ENCODE measurements at regions of chr17 and their contacts with region 1.

Region 1: GRCh38 chr17:20278805-20279204 is 188.5 kb downstream of the LGALS9B start:
- DNase-seq: no peak
- H3K4me3 ChIP-seq: no peak overlapping the region
- H3K27ac ChIP-seq: no peak overlapping the region
- H3K4me1 ChIP-seq: no peaks in the 10 kb centered on the region
- H3K27me3 ChIP-seq: no peaks in the 10 kb centered on the region
- CTCF ChIP-seq: no peak

Region 2: GRCh38 chr17:20235747-20236146 is 43.1 kb before region 1 on chr17:
- CTCF ChIA-PET with region 1: no interaction called
- dilution Hi-C with region 1: loop called (anchors 5 kb)
- in situ Hi-C with region 1: no loop called
- intact Hi-C with region 1: no loop called
- DNase-seq: no peak
- H3K4me3 ChIP-seq: no peak overlapping the region
- H3K27ac ChIP-seq: no peak overlapping the region
- H3K4me1 ChIP-seq: no peaks in the 10 kb centered on the region
- H3K27me3 ChIP-seq: no peaks in the 10 kb centered on the region
- CTCF ChIP-seq: no peak

Measured in mammary epithelial cell (primary cell).